CD4-positive, alpha-beta T cell (primary cell): ENCODE measurements at regions of chr3 and their contacts with region 1.

Region 1: GRCh38 chr3:141192345-141192744 is 39.3 kb upstream of the PXYLP1 start:
- DNase-seq: peak; percentile 92 to 99 (median 97)
- ATAC-seq: peak; percentile 100
- H3K4me3 ChIP-seq: no peak overlapping the region
- H3K4me3 Mint-ChIP-seq: no peak overlapping the region
- H3K27ac ChIP-seq: no peak overlapping the region
- H3K27ac Mint-ChIP-seq: no peak overlapping the region
- H3K4me1 ChIP-seq: no peaks in the 10 kb centered on the region
- H3K4me1 Mint-ChIP-seq: peaks cover 10% of the 10 kb centered on the region
- H3K27me3 ChIP-seq: peaks cover 7 to 9% of the 10 kb centered on the region in 2 experiments
- H3K27me3 Mint-ChIP-seq: peaks cover 14% of the 10 kb centered on the region
- CTCF ChIP-seq: peak; percentile 99

Region 2: GRCh38 chr3:139427283-139427993 is 1764.9 kb before region 1 on chr3:
- CTCF ChIA-PET with region 1: no interaction called
- POLR2A ChIA-PET with region 1: no interaction called
- intact Hi-C with region 1: loop called in 1 of 2 experiments (anchors 5 kb)
- DNase-seq: peak in 3 of 14 experiments; percentile 53 to 62 (median 61)
- ATAC-seq: no peak
- H3K4me3 ChIP-seq: no peak overlapping the region
- H3K4me3 Mint-ChIP-seq: no peak overlapping the region
- H3K27ac ChIP-seq: no peak overlapping the region
- H3K27ac Mint-ChIP-seq: no peak overlapping the region
- H3K4me1 ChIP-seq: no peaks in the 10 kb centered on the region
- H3K4me1 Mint-ChIP-seq: no peaks in the 10 kb centered on the region
- H3K27me3 ChIP-seq: no peaks in the 10 kb centered on the region
- H3K27me3 Mint-ChIP-seq: no peaks in the 10 kb centered on the region
- CTCF ChIP-seq: peak; percentile 80

Region 3: DNA sequence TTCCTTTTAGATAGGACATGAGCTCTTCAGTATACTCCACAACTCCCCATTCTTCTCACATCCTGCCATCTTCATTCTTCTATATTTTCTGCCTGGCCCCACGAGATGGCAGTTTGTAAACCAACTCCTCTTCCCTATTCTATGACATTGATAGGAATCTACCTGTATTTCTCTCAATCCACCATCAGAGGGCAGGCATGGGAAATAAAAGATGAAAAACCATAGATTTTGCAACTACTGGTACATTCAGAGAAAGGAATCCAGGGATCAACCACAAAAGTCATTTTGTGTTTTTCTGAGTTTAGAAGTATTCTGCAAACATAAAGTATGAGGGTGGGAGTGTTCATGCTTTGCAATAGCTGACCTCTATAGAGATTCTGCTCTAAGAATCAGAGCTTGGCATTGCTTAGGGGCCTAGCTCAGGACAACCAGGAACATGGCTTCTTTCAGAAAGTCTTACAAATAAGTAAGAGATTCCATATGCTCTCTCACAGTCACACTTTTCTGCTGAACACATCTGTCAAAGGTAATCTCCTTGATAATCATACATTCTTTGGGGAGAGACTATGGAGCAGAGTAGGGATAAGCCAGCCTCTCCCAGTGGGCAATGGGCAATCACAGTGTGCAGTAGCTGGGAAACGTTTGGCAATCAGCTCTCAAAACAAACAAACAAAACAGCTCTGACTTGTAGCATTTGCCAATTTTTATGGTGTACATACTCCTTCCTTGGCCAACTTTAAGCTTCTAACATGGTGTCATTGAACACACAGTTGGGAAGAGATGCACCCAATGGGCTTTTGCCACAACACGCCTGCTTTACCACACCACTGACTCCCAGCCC is 293.8 kb before region 1 on chr3:
- CTCF ChIA-PET with region 1: interaction called, 4 read pairs
- POLR2A ChIA-PET with region 1: no interaction called
- intact Hi-C with region 1: loop called (anchors 1 to 2 kb)
- DNase-seq: peak in 4 of 14 experiments; percentile 12 to 62 (median 55)
- ATAC-seq: peak; percentile 69
- H3K4me3 ChIP-seq: no peak overlapping the region
- H3K4me3 Mint-ChIP-seq: no peak overlapping the region
- H3K27ac ChIP-seq: no peak overlapping the region
- H3K27ac Mint-ChIP-seq: no peak overlapping the region
- H3K4me1 ChIP-seq: no peaks in the 10 kb centered on the region
- H3K4me1 Mint-ChIP-seq: no peaks in the 10 kb centered on the region
- H3K27me3 ChIP-seq: peaks cover 9 to 15% of the 10 kb centered on the region in 2 experiments
- H3K27me3 Mint-ChIP-seq: peaks cover 32% of the 10 kb centered on the region
- CTCF ChIP-seq: peak; percentile 67

Region 4: GRCh38 chr3:140933552-140933951 is 258.8 kb before region 1 on chr3:
- CTCF ChIA-PET with region 1: no interaction called
- POLR2A ChIA-PET with region 1: no interaction called
- intact Hi-C with region 1: no loop called
- DNase-seq: no peak
- ATAC-seq: no peak
- H3K4me3 ChIP-seq: no peak overlapping the region
- H3K4me3 Mint-ChIP-seq: no peak overlapping the region
- H3K27ac ChIP-seq: no peak overlapping the region
- H3K27ac Mint-ChIP-seq: no peak overlapping the region
- H3K4me1 ChIP-seq: no peaks in the 10 kb centered on the region
- H3K4me1 Mint-ChIP-seq: no peaks in the 10 kb centered on the region
- H3K27me3 ChIP-seq: peaks cover 3 to 27% of the 10 kb centered on the region in 2 experiments
- H3K27me3 Mint-ChIP-seq: peaks cover 50% of the 10 kb centered on the region
- CTCF ChIP-seq: no peak

Region 5: DNA sequence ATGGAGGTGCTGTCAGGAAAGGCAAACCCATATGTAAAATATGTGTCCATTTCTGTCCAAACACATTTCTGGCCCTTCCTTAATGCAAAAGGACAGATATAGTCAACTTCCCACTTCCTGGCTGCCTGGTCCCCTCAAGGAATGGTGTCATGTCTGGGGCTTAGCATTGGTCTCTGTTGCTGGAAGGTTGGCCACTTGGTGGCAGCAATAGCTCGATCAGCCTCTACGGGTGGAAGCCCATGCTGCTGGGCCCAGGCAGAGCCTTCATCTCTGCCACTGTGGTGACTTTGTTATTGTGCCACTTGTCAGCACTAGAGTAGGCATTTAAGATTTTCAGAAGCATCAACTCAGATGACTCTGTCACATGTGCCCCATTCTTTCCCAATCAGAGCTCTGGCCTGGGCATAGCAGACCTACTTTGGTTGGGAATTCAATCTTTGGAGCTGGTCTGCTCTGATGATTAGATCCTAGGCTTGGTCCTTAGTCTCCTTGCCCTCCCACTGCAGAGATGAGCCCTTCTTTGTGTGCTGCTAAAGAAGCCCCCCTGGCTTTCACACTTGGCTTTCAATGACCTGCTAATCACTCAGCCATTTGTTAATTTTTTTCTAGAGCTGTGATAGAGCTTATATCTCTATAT is 192.2 kb before region 1 on chr3:
- CTCF ChIA-PET with region 1: interaction called, 6 read pairs
- POLR2A ChIA-PET with region 1: no interaction called
- intact Hi-C with region 1: loop called in 1 of 2 experiments (anchors 1 kb)
- DNase-seq: peak; percentile 8 to 70 (median 36)
- ATAC-seq: peak; percentile 86
- H3K4me3 ChIP-seq: no peak overlapping the region
- H3K4me3 Mint-ChIP-seq: no peak overlapping the region
- H3K27ac ChIP-seq: no peak overlapping the region
- H3K27ac Mint-ChIP-seq: no peak overlapping the region
- H3K4me1 ChIP-seq: no peaks in the 10 kb centered on the region
- H3K4me1 Mint-ChIP-seq: no peaks in the 10 kb centered on the region
- H3K27me3 ChIP-seq: no peaks in the 10 kb centered on the region
- H3K27me3 Mint-ChIP-seq: no peaks in the 10 kb centered on the region
- CTCF ChIP-seq: peak; percentile 50

Region 6: DNA sequence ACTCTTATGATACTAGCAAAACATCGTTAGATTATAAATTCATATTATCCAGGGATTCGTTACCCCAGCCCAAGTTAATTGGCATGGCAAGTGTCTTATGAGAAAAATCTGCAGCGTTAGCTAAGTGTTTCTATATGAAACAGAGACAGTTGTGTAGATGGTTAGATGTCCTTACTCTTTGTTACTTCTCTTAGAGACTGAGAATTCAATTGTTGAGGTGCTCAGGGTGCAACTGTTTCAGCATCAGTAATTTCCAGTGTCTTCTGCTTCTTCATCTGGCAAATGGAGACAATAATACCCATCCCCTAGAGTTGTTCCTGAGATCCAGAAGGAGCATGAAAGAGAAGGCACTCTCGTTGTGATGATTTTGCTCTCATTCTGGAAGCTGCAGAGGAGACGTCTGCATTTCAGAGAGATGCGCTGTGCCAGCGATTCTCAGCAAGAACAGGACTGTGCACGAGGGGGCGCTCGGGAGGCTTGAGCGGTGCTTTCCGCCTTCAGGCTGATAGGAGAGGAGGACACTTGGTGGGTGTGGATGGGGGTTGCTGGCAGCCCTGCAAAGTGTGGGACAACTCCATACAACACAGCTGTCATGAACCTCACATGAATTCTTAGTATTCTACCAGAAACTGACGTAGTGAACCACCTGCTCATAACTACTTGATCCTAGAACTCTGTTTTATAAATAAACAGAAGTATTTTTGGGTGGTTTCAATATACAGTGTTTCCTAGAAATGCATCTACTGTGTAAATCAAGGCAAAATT is 180.9 kb before region 1 on chr3:
- CTCF ChIA-PET with region 1: interaction called, 6 read pairs
- POLR2A ChIA-PET with region 1: no interaction called
- intact Hi-C with region 1: loop called (anchors 1 to 5 kb)
- DNase-seq: peak; percentile 54 to 80 (median 66)
- ATAC-seq: peak; percentile 96
- H3K4me3 ChIP-seq: no peak overlapping the region
- H3K4me3 Mint-ChIP-seq: no peak overlapping the region
- H3K27ac ChIP-seq: no peak overlapping the region
- H3K27ac Mint-ChIP-seq: no peak overlapping the region
- H3K4me1 ChIP-seq: no peaks in the 10 kb centered on the region
- H3K4me1 Mint-ChIP-seq: peaks cover 6% of the 10 kb centered on the region
- H3K27me3 ChIP-seq: peaks cover 0 to 3% of the 10 kb centered on the region in 2 experiments
- H3K27me3 Mint-ChIP-seq: peaks cover 54% of the 10 kb centered on the region
- CTCF ChIP-seq: peak; percentile 63

Region 7: GRCh38 chr3:141105828-141106628 is 86.3 kb before region 1 on chr3:
- CTCF ChIA-PET with region 1: interaction called, 5 read pairs
- POLR2A ChIA-PET with region 1: no interaction called
- intact Hi-C with region 1: loop called in 1 of 2 experiments (anchors 2 kb)
- DNase-seq: peak; percentile 8 to 79 (median 38)
- ATAC-seq: peak; percentile 48
- H3K4me3 ChIP-seq: no peak overlapping the region
- H3K4me3 Mint-ChIP-seq: no peak overlapping the region
- H3K27ac ChIP-seq: no peak overlapping the region
- H3K27ac Mint-ChIP-seq: no peak overlapping the region
- H3K4me1 ChIP-seq: no peaks in the 10 kb centered on the region
- H3K4me1 Mint-ChIP-seq: no peaks in the 10 kb centered on the region
- H3K27me3 ChIP-seq: no peaks in the 10 kb centered on the region
- H3K27me3 Mint-ChIP-seq: no peaks in the 10 kb centered on the region
- CTCF ChIP-seq: peak; percentile 82

Region 8: GRCh38 chr3:141255846-141256261 is 63.5 kb after region 1 on chr3:
- CTCF ChIA-PET with region 1: interaction called, 6 read pairs
- POLR2A ChIA-PET with region 1: no interaction called
- intact Hi-C with region 1: loop called in 1 of 2 experiments (anchors 5 kb)
- DNase-seq: peak in 9 of 14 experiments; percentile 15 to 83 (median 52)
- ATAC-seq: peak; percentile 97
- H3K4me3 ChIP-seq: no peak overlapping the region
- H3K4me3 Mint-ChIP-seq: no peak overlapping the region
- H3K27ac ChIP-seq: no peak overlapping the region
- H3K27ac Mint-ChIP-seq: peak overlapping the region; percentile 69
- H3K4me1 ChIP-seq: peaks cover 15% of the 10 kb centered on the region
- H3K4me1 Mint-ChIP-seq: peaks cover 56% of the 10 kb centered on the region
- H3K27me3 ChIP-seq: no peaks in the 10 kb centered on the region
- H3K27me3 Mint-ChIP-seq: no peaks in the 10 kb centered on the region
- CTCF ChIP-seq: peak; percentile 64